CD4-positive, alpha-beta memory T cell (primary cell): ENCODE measurements at regions of chr19 and their contacts with region 1.

Region 1: GRCh38 chr19:19320362-19321142 is at the starts of genes MAU2 and SUGP1:
- DNase-seq: peak; percentile 92 to 94 (median 94)
- H3K4me3 ChIP-seq: peak within 1 kb of the TSS; percentile 96 to 98
- H3K4me3 Mint-ChIP-seq: peak within 1 kb of the TSS; percentile 93 to 100 (median 99)
- H3K27ac ChIP-seq: peak within 1 kb of the TSS; percentile 97
- H3K27ac Mint-ChIP-seq: peak within 1 kb of the TSS; percentile 94 to 100 (median 100)
- H3K4me1 ChIP-seq: peaks cover 49% of the 10 kb centered on the region
- H3K4me1 Mint-ChIP-seq: peaks cover 22 to 64% (median 40%) of the 10 kb centered on the region in 4 donors
- H3K27me3 ChIP-seq: no peaks in the 10 kb centered on the region
- H3K27me3 Mint-ChIP-seq: no peaks in the 10 kb centered on the region
- total RNA-seq, gene MAU2: 148 to 155 TPM
- total RNA-seq, gene SUGP1: 84.7 to 97.5 TPM

Region 2: DNA sequence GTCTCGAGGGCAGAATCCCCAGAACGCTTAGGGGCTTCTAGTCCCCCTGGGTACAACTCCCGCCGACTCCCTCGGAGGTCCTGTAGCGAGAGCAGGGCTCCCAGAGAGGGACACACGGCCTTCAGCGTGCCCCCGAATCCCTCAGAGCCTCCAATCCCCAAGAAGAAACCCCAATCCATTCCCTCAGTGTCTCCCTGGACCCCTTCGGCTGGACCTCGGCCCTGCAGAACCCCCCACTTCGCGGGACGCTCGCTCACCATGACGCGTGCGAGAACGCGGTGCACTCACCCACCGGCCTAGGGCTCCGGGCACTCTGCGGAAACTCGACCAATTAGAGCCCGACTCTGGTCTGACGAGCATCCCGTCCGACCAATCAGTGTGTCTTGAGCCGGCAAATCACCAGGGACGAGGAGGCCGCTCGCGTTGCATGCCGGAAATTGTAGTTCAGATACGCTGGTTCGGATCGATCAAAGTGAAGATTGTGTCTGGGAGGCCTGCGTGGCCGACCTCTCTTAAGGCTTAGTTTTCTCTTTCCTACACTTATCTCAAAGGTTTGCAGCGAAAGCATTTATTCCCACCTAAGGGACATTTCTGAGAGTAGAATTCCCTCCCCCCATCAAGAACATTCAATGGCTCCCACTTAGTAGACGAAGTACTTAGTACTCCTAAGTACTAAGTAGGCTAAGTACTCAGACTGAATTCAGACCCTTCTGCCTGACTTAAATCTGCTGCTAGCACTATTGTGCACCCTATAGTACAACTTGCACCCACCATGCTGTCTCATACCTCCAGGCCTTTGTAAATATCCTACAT is 182.2 kb before region 1 on chr19 and contains the start of gene TMEM161A:
- CTCF ChIA-PET with region 1: no interaction called
- POLR2A ChIA-PET with region 1: no interaction called
- intact Hi-C with region 1: loop called (anchors 5 kb)
- DNase-seq: peak; percentile 93 to 97 (median 94)
- H3K4me3 ChIP-seq: peak within 1 kb of the TSS; percentile 80 to 85
- H3K4me3 Mint-ChIP-seq: peak within 1 kb of the TSS; percentile 91 to 99 (median 98)
- H3K27ac ChIP-seq: peak within 1 kb of the TSS; percentile 71
- H3K27ac Mint-ChIP-seq: peak within 1 kb of the TSS; percentile 76 to 99 (median 96)
- H3K4me1 ChIP-seq: peaks cover 28% of the 10 kb centered on the region
- H3K4me1 Mint-ChIP-seq: peaks cover 10 to 32% (median 21%) of the 10 kb centered on the region in 4 donors
- H3K27me3 ChIP-seq: no peaks in the 10 kb centered on the region
- H3K27me3 Mint-ChIP-seq: no peaks in the 10 kb centered on the region
- total RNA-seq, gene TMEM161A: 22.5 to 25.1 TPM

Region 3: DNA sequence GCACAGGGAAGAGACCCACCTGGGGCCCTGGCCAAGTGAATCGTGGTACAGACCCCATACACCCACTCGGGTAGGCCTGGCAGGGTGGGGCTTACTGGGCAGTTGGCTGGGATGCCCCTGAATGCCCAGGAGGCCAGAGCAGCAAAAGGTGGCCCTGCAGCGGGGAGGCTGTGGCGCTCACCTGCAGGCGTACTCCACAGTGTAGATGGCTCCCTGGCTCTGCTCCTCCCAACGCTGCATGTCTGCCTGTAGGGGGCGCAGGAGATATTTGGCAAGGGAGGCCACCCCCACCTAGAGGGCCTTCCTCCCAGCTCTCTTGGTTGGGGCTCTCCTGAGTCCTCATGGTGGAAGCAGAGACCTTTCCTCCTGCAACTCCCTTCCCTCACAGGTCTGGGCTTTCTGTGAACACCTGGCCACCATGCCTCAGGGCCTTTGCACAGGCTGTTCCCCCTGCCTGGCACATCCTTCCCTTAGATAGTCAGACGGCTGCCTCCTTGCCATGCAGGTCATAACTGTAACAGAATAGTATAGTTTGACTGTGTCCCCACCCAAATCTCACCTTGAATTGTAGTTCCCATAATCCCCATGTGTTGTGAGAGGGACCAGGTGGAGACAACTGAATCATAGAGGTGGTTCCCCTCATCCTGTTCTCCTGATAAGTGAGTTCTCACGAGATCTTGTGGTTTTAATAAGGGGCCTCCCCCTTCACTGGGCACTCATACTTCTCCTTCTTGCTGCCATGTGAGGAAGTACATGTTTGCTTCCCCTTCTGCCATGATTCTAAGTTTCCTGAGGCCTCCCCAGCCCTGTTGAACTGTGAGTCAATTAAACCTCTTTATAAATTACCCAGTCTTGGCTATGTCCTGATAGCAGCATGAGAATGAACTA is 134.5 kb before region 1 on chr19:
- CTCF ChIA-PET with region 1: interaction called, 3 read pairs
- POLR2A ChIA-PET with region 1: no interaction called
- intact Hi-C with region 1: loop called (anchors 1 kb)
- DNase-seq: peak; percentile 64 to 69 (median 66)
- H3K4me3 ChIP-seq: no peak overlapping the region
- H3K4me3 Mint-ChIP-seq: peak overlapping the region in 2 of 8 donors; percentile 29 to 52
- H3K27ac ChIP-seq: no peak overlapping the region
- H3K27ac Mint-ChIP-seq: peak overlapping the region in 5 of 7 donors; percentile 55 to 81 (median 65)
- H3K4me1 ChIP-seq: peaks cover 21% of the 10 kb centered on the region
- H3K4me1 Mint-ChIP-seq: peaks cover 11 to 33% (median 24%) of the 10 kb centered on the region in 4 donors
- H3K27me3 ChIP-seq: no peaks in the 10 kb centered on the region
- H3K27me3 Mint-ChIP-seq: no peaks in the 10 kb centered on the region

Region 4: GRCh38 chr19:19192078-19192882 is 128.3 kb before region 1 on chr19 and contains the starts of genes BORCS8 and RFXANK:
- CTCF ChIA-PET with region 1: no interaction called
- POLR2A ChIA-PET with region 1: interaction called, 3 read pairs
- intact Hi-C with region 1: loop called (anchors 1 kb)
- DNase-seq: peak; percentile 97 to 99 (median 99)
- H3K4me3 ChIP-seq: peak within 1 kb of the TSS; percentile 98 to 100
- H3K4me3 Mint-ChIP-seq: peak within 1 kb of the TSS; percentile 95 to 99 (median 98)
- H3K27ac ChIP-seq: peak within 1 kb of the TSS; percentile 100
- H3K27ac Mint-ChIP-seq: peak within 1 kb of the TSS; percentile 98 to 100 (median 99)
- H3K4me1 ChIP-seq: peaks cover 44% of the 10 kb centered on the region
- H3K4me1 Mint-ChIP-seq: peaks cover 18 to 55% (median 37%) of the 10 kb centered on the region in 4 donors
- H3K27me3 ChIP-seq: no peaks in the 10 kb centered on the region
- H3K27me3 Mint-ChIP-seq: no peaks in the 10 kb centered on the region
- total RNA-seq, gene BORCS8: 36.0 to 41.2 TPM
- total RNA-seq, gene RFXANK: 69.5 to 77.2 TPM

Region 5: GRCh38 chr19:19203012-19203856 is 117.3 kb before region 1 on chr19 and contains the start of gene NR2C2AP:
- CTCF ChIA-PET with region 1: no interaction called
- POLR2A ChIA-PET with region 1: no interaction called
- intact Hi-C with region 1: loop called (anchors 1 kb)
- DNase-seq: peak; percentile 89 to 91 (median 90)
- H3K4me3 ChIP-seq: peak within 1 kb of the TSS; percentile 69 to 93
- H3K4me3 Mint-ChIP-seq: peak within 1 kb of the TSS; percentile 91 to 97 (median 94)
- H3K27ac ChIP-seq: peak within 1 kb of the TSS; percentile 73
- H3K27ac Mint-ChIP-seq: peak within 1 kb of the TSS; percentile 90 to 96 (median 94)
- H3K4me1 ChIP-seq: peaks cover 33% of the 10 kb centered on the region
- H3K4me1 Mint-ChIP-seq: peaks cover 19 to 43% (median 35%) of the 10 kb centered on the region in 4 donors
- H3K27me3 ChIP-seq: no peaks in the 10 kb centered on the region
- H3K27me3 Mint-ChIP-seq: peaks cover 0 to 4% of the 10 kb centered on the region in 2 donors
- total RNA-seq, gene NR2C2AP: 25.1 to 28.6 TPM

Region 6: GRCh38 chr19:19361075-19361594 is 40.6 kb after region 1 on chr19:
- CTCF ChIA-PET with region 1: no interaction called
- POLR2A ChIA-PET with region 1: interaction called, 4 read pairs
- intact Hi-C with region 1: loop called (anchors 5 kb)
- DNase-seq: peak; percentile 57 to 77 (median 65)
- H3K4me3 ChIP-seq: peak overlapping the region in 1 of 2 donors; percentile 24
- H3K4me3 Mint-ChIP-seq: peak overlapping the region in 6 of 8 donors; percentile 34 to 66 (median 52)
- H3K27ac ChIP-seq: no peak overlapping the region
- H3K27ac Mint-ChIP-seq: peak overlapping the region; percentile 25 to 88 (median 82)
- H3K4me1 ChIP-seq: peaks cover 35% of the 10 kb centered on the region
- H3K4me1 Mint-ChIP-seq: peaks cover 24 to 47% (median 35%) of the 10 kb centered on the region in 4 donors
- H3K27me3 ChIP-seq: no peaks in the 10 kb centered on the region
- H3K27me3 Mint-ChIP-seq: no peaks in the 10 kb centered on the region

Region 7: DNA sequence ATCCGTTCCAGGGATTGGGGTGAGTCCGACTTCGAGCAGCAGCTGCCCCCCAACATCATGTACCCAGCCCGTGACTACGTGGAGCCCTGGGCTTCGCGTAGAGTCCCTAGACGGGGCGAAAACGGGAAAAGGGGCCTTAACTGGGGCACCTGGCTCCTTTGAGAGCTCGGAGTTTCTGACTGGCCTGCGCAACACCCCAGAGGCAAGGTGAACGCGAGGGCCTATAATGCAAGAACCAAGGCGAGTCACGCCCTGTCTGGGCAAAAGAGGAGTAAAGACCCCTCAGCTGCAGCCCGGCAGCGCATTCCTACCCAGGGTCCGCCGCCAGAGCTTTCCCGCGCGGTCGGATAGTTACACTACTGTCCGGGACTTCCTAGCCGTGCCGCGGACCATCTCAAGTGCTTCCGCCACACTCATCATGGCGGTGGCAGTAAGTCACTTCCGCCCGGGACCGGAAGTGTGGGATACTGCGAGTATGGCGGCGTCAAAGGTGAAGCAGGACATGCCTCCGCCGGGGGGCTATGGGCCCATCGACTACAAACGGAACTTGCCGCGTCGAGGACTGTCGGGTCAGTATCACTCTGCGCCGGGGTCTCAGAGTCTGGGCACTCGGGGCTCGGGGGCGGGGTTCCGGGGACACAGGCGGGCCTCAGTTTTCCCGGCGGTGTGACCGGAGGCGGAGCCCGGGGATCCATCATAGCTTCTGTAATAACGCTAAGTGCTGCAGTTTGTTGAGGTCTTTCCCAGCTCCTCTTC is 195.4 kb after region 1 on chr19 and contains the start of gene NDUFA13:
- CTCF ChIA-PET with region 1: no interaction called
- POLR2A ChIA-PET with region 1: no interaction called
- intact Hi-C with region 1: loop called (anchors 1 kb)
- DNase-seq: peak; percentile 91 to 95 (median 92)
- H3K4me3 ChIP-seq: peak within 1 kb of the TSS; percentile 88 to 90
- H3K4me3 Mint-ChIP-seq: peak within 1 kb of the TSS; percentile 93 to 99 (median 97)
- H3K27ac ChIP-seq: peak within 1 kb of the TSS; percentile 92
- H3K27ac Mint-ChIP-seq: peak within 1 kb of the TSS; percentile 94 to 98 (median 97)
- H3K4me1 ChIP-seq: peaks cover 35% of the 10 kb centered on the region
- H3K4me1 Mint-ChIP-seq: peaks cover 16 to 47% (median 29%) of the 10 kb centered on the region in 4 donors
- H3K27me3 ChIP-seq: no peaks in the 10 kb centered on the region
- H3K27me3 Mint-ChIP-seq: no peaks in the 10 kb centered on the region
- total RNA-seq, gene NDUFA13: 191 to 199 TPM